Gastrocnemius medialis (tissue), 4 donors: ENCODE measurements at regions of chr9 and their contacts with region 1.

Region 1: DNA sequence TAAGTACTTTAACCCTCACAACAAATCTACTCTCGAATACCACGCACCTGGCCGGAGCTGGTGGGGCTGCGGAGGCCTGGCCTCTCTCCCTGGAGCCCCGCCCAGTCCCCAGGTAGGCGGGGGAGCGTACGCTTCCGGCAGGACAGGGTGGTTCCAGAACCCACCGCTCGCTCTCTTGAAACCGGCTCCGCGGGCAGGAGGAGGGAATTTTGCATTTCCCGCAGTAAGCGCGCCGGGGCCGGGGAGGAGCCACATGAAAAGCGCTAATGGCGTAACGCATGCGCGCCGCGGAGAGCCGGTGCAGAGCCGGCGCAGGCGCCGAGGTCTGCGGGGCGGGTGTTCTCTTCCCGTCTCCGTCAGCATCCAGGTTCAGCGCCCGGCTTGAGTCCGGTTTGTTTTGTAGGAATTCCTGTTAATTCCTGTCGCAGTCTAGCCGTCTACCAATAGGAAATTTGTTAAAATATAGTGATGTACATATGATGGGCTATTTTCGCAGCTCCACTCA is 20.8 kb downstream of the CAVIN4 start:
- DNase-seq: peak; percentile 30 to 50
- ATAC-seq: peak; percentile 31 to 35
- H3K4me3 ChIP-seq: peak overlapping the region; percentile 58 to 67 (median 62)
- H3K27ac ChIP-seq: peak overlapping the region in 2 of 4 donors; percentile 3 to 9
- H3K4me1 ChIP-seq: peaks cover 8 to 12% of the 10 kb centered on the region in 2 donors
- H3K27me3 ChIP-seq: no peaks in the 10 kb centered on the region
- CTCF ChIP-seq: no peak
- POLR2A ChIP-seq: no peak

Region 2: GRCh38 chr9:99828417-99829176 is 770.1 kb before region 1 on chr9:
- in situ Hi-C with region 1: no loop called
- intact Hi-C with region 1: no loop called
- DNase-seq: no peak
- ATAC-seq: no peak
- H3K4me3 ChIP-seq: no peak overlapping the region
- H3K27ac ChIP-seq: peak overlapping the region in 1 of 4 donors; percentile 19
- H3K4me1 ChIP-seq: peaks cover 5 to 10% of the 10 kb centered on the region in 2 donors
- H3K27me3 ChIP-seq: peaks cover 0 to 10% (median 6%) of the 10 kb centered on the region in 3 donors
- CTCF ChIP-seq: no peak
- POLR2A ChIP-seq: no peak

Region 3: DNA sequence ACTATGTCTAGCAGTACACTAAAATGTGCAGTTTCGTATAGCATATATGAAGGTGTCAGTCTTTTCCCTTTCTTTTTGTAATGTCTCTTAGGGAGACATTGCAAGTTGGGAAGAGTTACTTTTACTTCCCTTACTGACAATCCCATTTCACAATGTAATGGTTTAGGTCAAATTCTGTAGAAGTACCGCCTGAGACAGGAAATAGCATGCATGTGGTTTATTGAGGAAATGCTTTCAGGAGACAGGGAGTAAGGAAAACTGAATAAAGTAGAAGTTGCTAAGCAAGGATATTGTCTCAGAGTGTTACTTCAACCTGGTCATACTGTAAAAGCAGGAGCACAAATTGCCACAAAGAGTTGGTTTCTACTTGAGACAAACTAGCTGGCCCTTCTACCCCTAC is 203.9 kb before region 1 on chr9:
- in situ Hi-C with region 1: no loop called
- intact Hi-C with region 1: no loop called
- DNase-seq: no peak
- ATAC-seq: no peak
- H3K4me3 ChIP-seq: no peak overlapping the region
- H3K27ac ChIP-seq: no peak overlapping the region
- H3K4me1 ChIP-seq: no peaks in the 10 kb centered on the region
- H3K27me3 ChIP-seq: no peaks in the 10 kb centered on the region
- CTCF ChIP-seq: no peak
- POLR2A ChIP-seq: no peak

Region 4: DNA sequence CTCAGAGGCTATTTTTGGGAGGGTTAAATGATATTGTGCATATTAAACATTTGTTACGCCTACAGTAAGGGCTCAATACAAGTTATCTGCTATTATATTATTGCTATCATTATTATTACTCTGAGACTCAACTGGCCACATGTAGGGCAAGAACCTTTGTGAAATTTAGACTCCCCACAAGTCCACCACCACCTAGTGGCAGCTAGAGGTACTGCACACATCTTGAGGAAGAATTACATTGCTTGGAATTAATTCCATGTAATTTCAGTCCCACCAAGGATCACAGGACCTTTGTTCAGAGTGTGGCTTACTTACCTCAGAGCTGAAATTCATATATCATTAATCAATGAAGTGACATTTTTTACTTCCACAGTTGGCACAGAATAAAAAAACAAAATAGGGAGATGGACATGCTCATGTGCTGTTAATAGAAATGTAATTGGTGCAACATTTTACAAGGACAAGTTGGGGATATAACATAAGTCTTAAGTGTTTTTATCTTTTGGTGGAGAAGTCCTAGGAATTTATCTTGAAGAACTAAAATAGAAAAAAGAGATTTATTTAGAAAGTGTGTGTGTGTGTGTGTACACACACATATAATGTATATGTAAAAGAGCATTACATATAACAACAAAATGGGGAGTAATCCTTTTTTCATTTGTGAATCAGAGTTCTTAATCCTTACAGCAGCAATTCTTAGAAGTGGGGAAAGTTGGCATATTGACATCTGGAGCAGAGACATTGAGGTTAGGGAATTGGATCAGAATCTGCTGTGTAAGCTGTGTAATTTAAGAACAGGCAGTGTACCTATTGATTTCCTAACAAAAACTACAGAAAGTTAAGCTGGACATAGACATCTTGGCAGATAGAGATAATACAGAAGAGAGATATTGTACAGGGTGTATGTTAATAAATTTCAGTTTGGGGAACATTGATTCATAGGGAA is 160.6 kb before region 1 on chr9:
- in situ Hi-C with region 1: loop called in 2 of 4 experiments (anchors 10 to 25 kb)
- intact Hi-C with region 1: no loop called
- DNase-seq: peak; percentile 43 to 66
- ATAC-seq: peak in 1 of 2 donors; percentile 28
- H3K4me3 ChIP-seq: no peak overlapping the region
- H3K27ac ChIP-seq: peak overlapping the region; percentile 71 to 83 (median 75)
- H3K4me1 ChIP-seq: peaks cover 19 to 23% of the 10 kb centered on the region in 2 donors
- H3K27me3 ChIP-seq: no peaks in the 10 kb centered on the region
- CTCF ChIP-seq: peak; percentile 82 to 95 (median 84)
- POLR2A ChIP-seq: no peak

Region 5: GRCh38 chr9:100443781-100444768 is 154.6 kb before region 1 on chr9:
- in situ Hi-C with region 1: loop called in 2 of 4 experiments (anchors 10 to 25 kb)
- intact Hi-C with region 1: loop called (anchors 2 kb)
- DNase-seq: no peak
- ATAC-seq: no peak
- H3K4me3 ChIP-seq: no peak overlapping the region
- H3K27ac ChIP-seq: no peak overlapping the region
- H3K4me1 ChIP-seq: peaks cover 15 to 19% of the 10 kb centered on the region in 2 donors
- H3K27me3 ChIP-seq: no peaks in the 10 kb centered on the region
- CTCF ChIP-seq: no peak
- POLR2A ChIP-seq: no peak

Region 6: GRCh38 chr9:100505564-100506159 is 93.0 kb before region 1 on chr9:
- in situ Hi-C with region 1: loop called in 3 of 4 experiments (anchors 5 to 10 kb)
- intact Hi-C with region 1: loop called (anchors 1 kb)
- DNase-seq: peak; percentile 19 to 54
- ATAC-seq: peak in 1 of 2 donors; percentile 49
- H3K4me3 ChIP-seq: no peak overlapping the region
- H3K27ac ChIP-seq: no peak overlapping the region
- H3K4me1 ChIP-seq: no peaks in the 10 kb centered on the region
- H3K27me3 ChIP-seq: no peaks in the 10 kb centered on the region
- CTCF ChIP-seq: peak; percentile 65 to 84 (median 70)
- POLR2A ChIP-seq: no peak

Region 7: DNA sequence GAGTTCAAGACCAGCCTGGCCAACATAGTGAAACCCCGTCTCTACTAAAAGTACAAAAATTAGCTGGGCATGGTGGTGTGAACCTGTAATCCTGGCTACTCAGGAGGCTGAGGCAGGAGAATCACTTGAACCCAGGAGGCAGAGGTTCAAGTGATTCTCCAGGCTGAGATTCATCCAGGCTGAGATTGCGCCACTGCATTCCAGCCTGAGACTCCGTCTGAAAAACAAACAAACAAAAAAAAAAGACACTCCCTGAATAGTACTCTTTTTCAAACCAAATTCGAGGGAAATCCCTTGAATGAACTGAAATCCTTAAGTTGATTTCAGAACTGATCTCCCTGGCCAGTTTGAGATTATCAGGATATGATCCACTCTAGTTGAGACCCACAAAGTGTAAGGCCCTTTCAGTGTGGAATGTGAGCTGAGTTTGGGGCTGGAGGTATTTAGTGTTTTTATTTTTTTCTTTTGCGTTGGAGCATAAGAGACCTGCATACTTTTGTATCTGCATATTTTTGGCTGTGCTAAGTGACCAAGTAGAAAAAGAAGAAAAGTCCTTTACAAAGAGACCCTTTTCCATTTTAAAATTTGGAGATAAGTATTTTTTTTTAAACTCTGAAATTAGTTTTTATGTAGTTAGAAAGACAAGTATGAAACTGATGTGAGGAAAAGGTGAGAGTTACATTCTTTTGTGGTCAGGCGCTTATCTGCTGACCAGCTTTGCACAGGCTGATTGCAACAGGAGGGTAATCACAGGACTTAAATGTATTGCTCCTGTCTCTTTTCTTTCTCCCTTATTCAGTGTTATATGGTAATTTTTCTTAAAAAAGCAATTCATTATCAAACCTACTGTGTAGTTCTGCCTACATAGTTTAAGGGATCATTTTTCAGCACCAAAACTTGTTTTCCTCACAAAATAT is 82.9 kb before region 1 on chr9:
- in situ Hi-C with region 1: loop called in 1 of 4 experiments (anchors 10 kb)
- intact Hi-C with region 1: no loop called
- DNase-seq: no peak
- ATAC-seq: no peak
- H3K4me3 ChIP-seq: no peak overlapping the region
- H3K27ac ChIP-seq: no peak overlapping the region
- H3K4me1 ChIP-seq: no peaks in the 10 kb centered on the region
- H3K27me3 ChIP-seq: no peaks in the 10 kb centered on the region
- CTCF ChIP-seq: no peak
- POLR2A ChIP-seq: no peak

Region 8: DNA sequence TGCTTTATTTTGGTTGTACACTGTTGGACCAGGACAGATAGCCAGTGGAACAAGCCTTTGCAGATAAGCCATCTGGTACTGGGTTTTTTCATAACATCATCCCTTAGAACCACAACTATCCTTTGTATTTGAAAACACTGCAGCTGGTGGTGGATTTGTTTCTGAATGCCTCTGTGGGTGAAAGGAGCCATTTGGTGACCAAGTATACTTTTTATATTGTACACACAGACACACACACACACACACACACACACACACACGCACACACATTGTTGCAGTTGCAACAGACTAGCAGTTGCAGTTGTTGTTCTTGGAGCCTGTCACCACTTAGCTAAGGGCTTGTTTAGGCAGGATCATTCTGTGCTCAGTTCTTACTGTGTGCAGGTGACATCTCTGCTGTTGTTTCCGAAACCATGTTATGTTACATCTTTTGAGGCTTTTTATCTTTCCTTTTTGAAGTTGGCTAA is 43.7 kb before region 1 on chr9:
- in situ Hi-C with region 1: no loop called
- intact Hi-C with region 1: no loop called
- DNase-seq: no peak
- ATAC-seq: no peak
- H3K4me3 ChIP-seq: no peak overlapping the region
- H3K27ac ChIP-seq: no peak overlapping the region
- H3K4me1 ChIP-seq: no peaks in the 10 kb centered on the region
- H3K27me3 ChIP-seq: no peaks in the 10 kb centered on the region
- CTCF ChIP-seq: no peak
- POLR2A ChIP-seq: no peak

Region 9: GRCh38 chr9:100575765-100576386 is 22.8 kb before region 1 on chr9:
- in situ Hi-C with region 1: no loop called
- intact Hi-C with region 1: no loop called
- DNase-seq: no peak
- ATAC-seq: no peak
- H3K4me3 ChIP-seq: no peak overlapping the region
- H3K27ac ChIP-seq: peak overlapping the region; percentile 80 to 94 (median 88)
- H3K4me1 ChIP-seq: peaks cover 22 to 25% of the 10 kb centered on the region in 2 donors
- H3K27me3 ChIP-seq: no peaks in the 10 kb centered on the region
- CTCF ChIP-seq: no peak
- POLR2A ChIP-seq: no peak

Region 10: GRCh38 chr9:101311758-101312420 is 713.2 kb after region 1 on chr9:
- in situ Hi-C with region 1: loop called (anchors 5 to 25 kb)
- intact Hi-C with region 1: loop called (anchors 1 kb)
- DNase-seq: no peak
- ATAC-seq: peak; percentile 47 to 75
- H3K4me3 ChIP-seq: no peak overlapping the region
- H3K27ac ChIP-seq: no peak overlapping the region
- H3K4me1 ChIP-seq: no peaks in the 10 kb centered on the region
- H3K27me3 ChIP-seq: no peaks in the 10 kb centered on the region
- CTCF ChIP-seq: peak; percentile 50 to 70 (median 63)
- POLR2A ChIP-seq: no peak